ENCODE measurements at regions of chr20 and their contacts with region 1.

Region 1: GRCh38 chr20:23350196-23350903 is at the start of gene NXT1:
- DNase-seq: peak; percentile 96 to 99 (median 98)
- H3K4me3 ChIP-seq: peak within 1 kb of the TSS; percentile 72
- H3K27ac ChIP-seq: peak within 1 kb of the TSS; percentile 89 to 99
- H3K4me1 ChIP-seq: peaks cover 3% of the 10 kb centered on the region
- H3K27me3 ChIP-seq: no peaks in the 10 kb centered on the region
- CTCF ChIP-seq: peak in 1 of 3 donors; percentile 4
- EP300 ChIP-seq: peak; percentile 75
- POLR2A ChIP-seq: peak; percentile 90
- total RNA-seq, gene NXT1: 19.3 to 44.6 (median 32.1) TPM

Region 2: DNA sequence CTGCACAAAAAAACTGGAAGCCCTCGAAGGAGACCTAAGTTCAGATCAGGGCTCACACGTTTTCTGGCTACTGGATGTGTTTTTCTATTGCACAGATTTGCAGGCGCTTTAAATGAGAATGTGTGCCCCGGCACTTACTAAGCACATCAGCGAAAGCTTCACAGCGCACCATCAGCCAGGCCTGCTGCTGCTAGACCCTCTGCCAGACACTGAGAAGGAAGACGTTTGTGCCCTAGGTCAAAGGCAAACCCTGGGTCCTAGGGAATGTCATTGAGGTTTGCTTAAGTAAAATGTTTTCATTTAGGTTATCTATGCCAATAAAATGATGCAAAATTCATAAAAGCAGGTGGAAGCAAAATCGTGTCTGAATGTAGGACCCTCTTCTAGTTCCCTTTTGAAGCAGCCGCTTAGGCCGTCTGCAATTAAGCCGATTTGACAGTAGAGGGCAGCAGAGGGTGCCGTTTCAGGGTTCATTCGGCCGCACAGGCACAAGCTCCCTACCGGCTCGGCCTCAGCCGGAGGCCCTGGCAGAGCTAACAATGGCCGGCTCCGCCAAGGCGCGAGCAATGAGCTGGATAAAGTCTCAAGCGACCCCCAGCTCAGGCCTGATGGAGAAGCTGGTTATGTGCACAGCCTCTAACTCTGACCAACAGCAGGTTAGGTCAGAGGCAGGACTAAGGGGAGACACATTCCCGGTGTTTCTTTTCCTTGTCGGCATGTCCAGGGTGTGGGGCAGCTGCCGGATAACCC is 658.8 kb before region 1 on chr20:
- intact Hi-C with region 1: loop called in 1 of 4 experiments (anchors 10 kb)
- DNase-seq: peak; percentile 70 to 83 (median 81)
- H3K4me3 ChIP-seq: peak overlapping the region; percentile 7
- H3K27ac ChIP-seq: no peak overlapping the region
- H3K4me1 ChIP-seq: peaks cover 5% of the 10 kb centered on the region
- H3K27me3 ChIP-seq: no peaks in the 10 kb centered on the region
- CTCF ChIP-seq: peak; percentile 84 to 87 (median 85)
- EP300 ChIP-seq: no peak
- POLR2A ChIP-seq: no peak

Region 3: DNA sequence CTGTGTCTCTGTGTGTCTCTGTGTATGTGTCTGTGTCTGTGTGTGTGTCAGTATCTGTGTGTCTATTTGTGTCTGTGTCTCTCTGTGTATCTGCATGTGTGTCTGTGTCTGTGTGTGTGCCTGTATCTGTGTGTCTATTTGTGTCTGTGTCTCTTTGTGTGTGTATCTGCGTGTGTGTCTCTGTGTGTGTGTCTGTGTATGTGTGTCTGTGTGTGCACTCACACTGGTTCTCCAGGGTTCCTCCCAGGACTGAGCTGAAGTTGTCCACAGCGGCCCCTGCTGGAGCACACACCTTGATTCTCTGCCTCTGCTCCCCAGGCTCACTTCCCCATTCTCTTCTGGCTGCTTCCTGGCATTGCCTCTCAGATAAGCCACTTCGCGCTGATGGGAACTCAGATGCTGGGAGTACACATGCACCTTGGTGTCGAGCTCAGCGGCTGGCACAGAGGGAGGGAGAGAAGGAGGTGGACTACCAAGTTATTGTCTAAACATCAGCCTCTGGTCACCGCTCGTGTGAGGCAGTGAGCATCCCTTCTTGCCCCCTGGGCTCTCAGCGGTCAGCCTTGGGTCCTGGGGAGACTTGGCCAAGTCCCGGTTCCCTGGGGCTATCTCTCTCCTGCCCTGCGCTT is 104.7 kb before region 1 on chr20:
- intact Hi-C with region 1: loop called in 1 of 4 experiments (anchors 10 kb)
- DNase-seq: peak in 2 of 5 donors; percentile 34 to 36
- H3K4me3 ChIP-seq: no peak overlapping the region
- H3K27ac ChIP-seq: no peak overlapping the region
- H3K4me1 ChIP-seq: peaks cover 2% of the 10 kb centered on the region
- H3K27me3 ChIP-seq: no peaks in the 10 kb centered on the region
- CTCF ChIP-seq: no peak
- EP300 ChIP-seq: no peak
- POLR2A ChIP-seq: no peak

Region 4: GRCh38 chr20:23606652-23607049 is 256.3 kb after region 1 on chr20:
- intact Hi-C with region 1: loop called in 2 of 4 experiments (anchors 10 kb)
- DNase-seq: peak; percentile 71 to 87 (median 82)
- H3K4me3 ChIP-seq: no peak overlapping the region
- H3K27ac ChIP-seq: no peak overlapping the region
- H3K4me1 ChIP-seq: no peaks in the 10 kb centered on the region
- H3K27me3 ChIP-seq: no peaks in the 10 kb centered on the region
- CTCF ChIP-seq: peak; percentile 64 to 81 (median 68)
- EP300 ChIP-seq: no peak
- POLR2A ChIP-seq: no peak

Region 5: DNA sequence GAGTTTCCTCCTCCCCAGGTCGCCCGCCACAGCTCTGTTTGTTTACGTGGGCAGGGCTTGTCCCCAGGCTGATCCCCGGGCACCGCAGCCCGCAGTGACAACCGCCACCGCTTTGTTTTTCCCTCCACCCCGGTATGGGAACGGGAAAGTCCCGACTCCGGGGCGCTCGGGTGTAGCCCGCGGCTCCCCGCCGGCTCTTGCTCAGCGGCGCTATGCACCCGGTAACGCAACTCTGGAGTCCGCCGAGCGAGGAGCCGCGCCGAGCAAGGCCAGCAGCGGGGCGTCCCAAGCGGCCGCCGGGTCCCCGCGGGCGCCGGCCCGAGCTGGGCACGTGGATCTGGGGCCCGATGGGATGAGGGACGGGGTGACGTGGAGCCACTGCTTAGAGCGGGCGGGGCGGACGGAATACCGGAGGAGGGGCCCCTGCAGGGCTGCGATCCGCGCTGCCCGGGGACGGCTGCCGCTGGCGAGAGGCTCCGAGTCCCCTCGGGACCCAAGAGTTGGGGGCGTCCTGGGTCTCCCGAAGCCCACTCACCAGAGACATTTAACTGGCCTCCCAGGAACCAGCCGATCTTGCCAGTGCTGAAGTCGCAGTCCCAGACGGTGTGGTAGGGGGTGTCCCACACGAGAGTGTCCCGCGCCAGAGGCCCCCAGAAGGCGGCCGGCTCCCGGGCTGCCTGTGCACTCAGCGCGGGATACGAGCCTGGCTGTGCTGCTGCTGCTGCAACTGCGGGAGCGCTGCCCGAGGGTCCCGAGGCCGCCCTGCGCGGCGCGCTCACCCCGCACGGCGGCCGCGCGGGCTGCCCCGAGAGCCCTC is 1707.1 kb after region 1 on chr20:
- intact Hi-C with region 1: loop called in 1 of 4 experiments (anchors 10 kb)
- DNase-seq: peak; percentile 58 to 69 (median 67)
- H3K4me3 ChIP-seq: peak overlapping the region; percentile 80
- H3K27ac ChIP-seq: peak overlapping the region; percentile 74 to 86
- H3K4me1 ChIP-seq: peaks cover 37% of the 10 kb centered on the region
- H3K27me3 ChIP-seq: no peaks in the 10 kb centered on the region
- CTCF ChIP-seq: no peak
- EP300 ChIP-seq: no peak
- POLR2A ChIP-seq: peak; percentile 34